ENCODE measurements at regions of chr11 and their contacts with region 1.

Region 1: GRCh38 chr11:43944761-43945311 is 2.4 kb downstream of the C11orf96 start:
- DNase-seq: peak; percentile 46 to 71
- ATAC-seq: peak; percentile 61 to 63
- H3K4me3 ChIP-seq: peak overlapping the region; percentile 61 to 69 (median 67)
- H3K27ac ChIP-seq: peak overlapping the region; percentile 67 to 83 (median 82)
- H3K4me1 ChIP-seq: peaks cover 14 to 15% of the 10 kb centered on the region in 2 donors
- H3K27me3 ChIP-seq: peaks cover 0 to 14% (median 11%) of the 10 kb centered on the region in 3 donors
- CTCF ChIP-seq: peak; percentile 86 to 96 (median 91)
- POLR2A ChIP-seq: no peak

Region 2: GRCh38 chr11:43825217-43825816 is 119.5 kb before region 1 on chr11:
- in situ Hi-C with region 1: no loop called
- intact Hi-C with region 1: loop called (anchors 5 kb)
- DNase-seq: no peak
- ATAC-seq: peak in 1 of 2 donors; percentile 58
- H3K4me3 ChIP-seq: no peak overlapping the region
- H3K27ac ChIP-seq: no peak overlapping the region
- H3K4me1 ChIP-seq: peaks cover 17 to 24% of the 10 kb centered on the region in 2 donors
- H3K27me3 ChIP-seq: no peaks in the 10 kb centered on the region
- CTCF ChIP-seq: peak; percentile 51 to 73 (median 59)
- POLR2A ChIP-seq: no peak

Region 3: GRCh38 chr11:43905813-43906241 is 39.0 kb before region 1 on chr11:
- in situ Hi-C with region 1: no loop called
- intact Hi-C with region 1: loop called (anchors 5 kb)
- DNase-seq: no peak
- ATAC-seq: peak in 1 of 2 donors; percentile 18
- H3K4me3 ChIP-seq: no peak overlapping the region
- H3K27ac ChIP-seq: peak overlapping the region; percentile 7 to 64 (median 31)
- H3K4me1 ChIP-seq: peaks cover 18 to 21% of the 10 kb centered on the region in 2 donors
- H3K27me3 ChIP-seq: no peaks in the 10 kb centered on the region
- CTCF ChIP-seq: no peak
- POLR2A ChIP-seq: no peak

Region 4: DNA sequence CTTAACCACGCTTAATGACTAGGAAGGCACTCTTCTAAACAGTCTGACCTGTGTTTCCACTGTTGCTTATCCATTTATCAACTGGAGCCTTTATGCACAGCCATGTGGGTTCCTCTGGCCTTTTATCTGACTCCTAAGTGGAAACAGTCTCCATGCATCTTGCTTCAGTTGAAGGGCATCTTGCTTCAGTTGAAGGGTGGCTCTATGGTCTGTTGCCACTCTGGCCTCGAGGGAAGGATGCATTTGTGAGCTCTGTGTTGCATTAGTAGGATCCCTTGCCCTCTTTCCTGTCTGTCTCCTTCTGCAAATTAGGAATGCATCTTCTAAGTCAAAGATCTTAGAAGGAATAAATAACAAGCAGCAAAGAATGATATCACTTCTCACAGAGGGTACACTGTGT is 28.2 kb before region 1 on chr11:
- in situ Hi-C with region 1: no loop called
- intact Hi-C with region 1: no loop called
- DNase-seq: no peak
- ATAC-seq: no peak
- H3K4me3 ChIP-seq: no peak overlapping the region
- H3K27ac ChIP-seq: peak overlapping the region in 1 of 4 donors; percentile 93
- H3K4me1 ChIP-seq: peaks cover 18 to 32% of the 10 kb centered on the region in 2 donors
- H3K27me3 ChIP-seq: no peaks in the 10 kb centered on the region
- CTCF ChIP-seq: no peak
- POLR2A ChIP-seq: no peak

Region 5: DNA sequence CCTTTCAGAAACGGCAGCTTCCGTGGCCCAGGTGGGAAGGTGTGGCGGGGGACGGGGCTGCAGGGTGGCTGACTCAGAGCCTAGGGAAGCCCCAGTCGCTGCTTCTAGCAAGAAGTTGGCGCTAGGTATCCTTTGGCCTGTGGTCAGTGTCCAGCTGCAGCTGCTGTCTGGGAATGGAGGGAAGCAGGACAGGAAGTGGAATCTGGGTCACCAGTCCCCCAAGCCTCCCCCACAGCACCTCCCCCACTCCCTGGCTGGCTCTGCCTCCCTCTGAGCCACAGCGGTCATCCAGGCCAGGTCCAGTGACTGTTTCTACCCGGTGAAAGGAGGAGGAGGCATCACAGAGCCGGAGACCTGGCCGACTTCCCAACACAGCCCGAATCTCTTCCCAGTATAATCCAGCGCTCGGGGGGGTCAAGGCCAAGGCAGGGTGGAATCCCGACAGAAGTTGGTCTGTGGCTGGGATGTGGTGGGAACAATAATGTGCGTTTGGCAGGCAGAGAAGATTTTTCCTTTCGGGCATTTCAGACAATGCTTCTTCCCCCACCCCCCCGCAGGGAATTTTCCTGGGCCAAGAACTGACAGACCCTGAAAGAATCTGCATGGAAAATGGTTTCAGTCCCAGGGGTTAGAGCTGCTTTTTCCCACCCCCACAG is 42.7 kb after region 1 on chr11:
- in situ Hi-C with region 1: no loop called
- intact Hi-C with region 1: loop called (anchors 5 kb)
- DNase-seq: peak; percentile 72 to 83
- ATAC-seq: peak; percentile 71 to 79
- H3K4me3 ChIP-seq: peak overlapping the region in 3 of 4 donors; percentile 9 to 33 (median 20)
- H3K27ac ChIP-seq: peak overlapping the region; percentile 61 to 75 (median 72)
- H3K4me1 ChIP-seq: peaks cover 35 to 59% of the 10 kb centered on the region in 2 donors
- H3K27me3 ChIP-seq: no peaks in the 10 kb centered on the region
- CTCF ChIP-seq: no peak
- POLR2A ChIP-seq: no peak

Region 6: GRCh38 chr11:44036811-44037657 is 92.2 kb after region 1 on chr11:
- in situ Hi-C with region 1: loop called in 1 of 4 experiments (anchors 10 kb)
- intact Hi-C with region 1: loop called (anchors 5 kb)
- DNase-seq: peak; percentile 38 to 63
- ATAC-seq: peak; percentile 63 to 83
- H3K4me3 ChIP-seq: no peak overlapping the region
- H3K27ac ChIP-seq: peak overlapping the region in 2 of 4 donors; percentile 37 to 50
- H3K4me1 ChIP-seq: peaks cover under 1 to 5% of the 10 kb centered on the region in 2 donors
- H3K27me3 ChIP-seq: peaks cover 0 to 5% (median 5%) of the 10 kb centered on the region in 3 donors
- CTCF ChIP-seq: peak; percentile 47 to 75 (median 61)
- POLR2A ChIP-seq: no peak

Measured in gastrocnemius medialis (tissue), 4 donors.